GM18951 (cell line): ENCODE measurements at regions of chr4 and their contacts with region 1.

Region 1: DNA sequence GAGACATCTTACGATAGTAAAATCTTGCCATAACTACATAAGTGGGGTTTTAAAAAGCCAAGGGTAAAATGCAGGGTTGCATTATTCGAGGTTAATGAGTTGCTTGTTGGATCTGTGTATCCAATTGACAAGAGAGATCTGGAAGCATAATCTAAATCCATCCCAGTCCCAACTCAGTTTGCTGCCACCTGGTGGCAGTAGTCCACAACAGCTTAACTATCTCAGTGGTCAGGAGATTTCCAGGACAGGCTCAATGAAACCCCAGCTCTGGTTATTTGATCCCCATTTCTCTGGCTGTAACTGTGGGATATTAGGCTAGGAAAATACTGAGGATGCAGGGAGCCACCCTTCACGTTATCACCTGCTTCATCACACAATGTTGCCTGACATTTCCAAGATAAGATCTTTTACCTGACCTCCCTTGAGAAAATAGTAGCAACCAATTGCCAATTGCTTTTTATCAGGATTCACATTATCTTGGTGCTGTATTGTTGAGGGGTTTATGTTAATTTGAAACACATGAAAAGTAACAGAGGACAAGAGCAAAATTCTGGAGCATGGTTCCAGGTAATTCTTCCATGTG is 88.2 kb upstream of the TNIP3 start:
- POLR2A ChIP-seq: no peak

Region 2: DNA sequence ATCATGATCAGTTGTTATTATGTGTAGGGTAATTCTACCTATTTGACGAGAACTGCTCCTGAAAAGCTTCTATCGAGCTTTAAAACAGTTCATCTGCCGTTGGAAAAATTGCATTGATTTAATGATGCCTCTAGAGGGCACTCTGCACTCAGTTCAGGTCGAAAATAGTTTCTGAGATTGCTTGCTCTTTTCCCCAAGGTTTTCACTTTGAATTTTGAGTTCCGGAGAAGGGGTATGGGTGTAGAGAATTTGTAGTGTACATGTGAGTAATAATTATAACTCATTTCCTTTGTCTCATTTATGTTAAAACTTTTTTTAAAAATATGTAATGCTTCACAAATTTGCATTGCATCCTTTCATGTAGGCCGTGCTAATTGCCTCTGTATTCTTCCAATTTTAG is 59.8 kb before region 1 on chr4:
- in situ Hi-C with region 1: loop called (anchors 5 kb)
- POLR2A ChIP-seq: no peak